ENCODE measurements at regions of chr15 and their contacts with region 1.

Region 1: DNA sequence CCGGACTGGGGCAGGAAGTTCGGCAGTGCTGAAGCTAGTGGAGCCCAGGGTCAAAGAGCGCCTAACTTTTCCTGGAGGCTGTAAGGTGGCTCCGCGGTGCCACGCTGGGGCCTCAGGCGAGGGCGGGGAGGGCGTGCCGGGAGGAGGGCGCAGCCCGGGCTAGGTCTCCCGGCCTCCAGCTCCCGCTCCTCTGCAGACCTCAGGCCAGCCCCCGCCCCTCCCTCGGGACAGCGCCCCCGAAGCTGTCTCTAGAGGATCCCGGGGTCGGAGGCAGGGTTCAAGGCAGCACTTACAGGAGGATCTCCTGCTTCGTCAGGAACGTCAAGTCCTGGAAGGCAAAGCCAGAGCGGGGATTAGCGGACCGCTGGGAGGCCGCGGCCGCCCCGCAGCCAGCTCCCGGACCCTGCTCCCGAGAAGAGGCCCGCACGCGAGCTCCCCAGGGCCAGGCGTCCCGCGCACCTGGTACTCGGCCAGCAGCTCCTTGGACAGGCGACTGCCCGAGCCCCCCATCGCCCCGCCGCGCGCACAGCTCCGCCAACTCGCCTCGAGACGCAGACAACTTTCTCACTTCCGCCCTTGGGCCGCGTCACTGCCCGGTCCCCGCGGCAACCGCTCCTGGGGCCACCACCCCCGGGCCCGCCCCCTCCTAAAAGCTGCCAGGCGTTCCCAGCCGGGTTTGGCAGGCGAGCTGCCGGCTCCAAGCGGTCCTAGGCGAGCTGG is at the start of gene CIB1:
- DNase-seq: peak; percentile 99
- H3K4me3 ChIP-seq: peak within 1 kb of the TSS; percentile 71 to 91 (median 83)
- H3K27ac ChIP-seq: peak within 1 kb of the TSS; percentile 87 to 96 (median 92)
- H3K4me1 ChIP-seq: peaks cover 0 to 59% (median 49%) of the 10 kb centered on the region in 4 donors
- H3K27me3 ChIP-seq: no peaks in the 10 kb centered on the region
- CTCF ChIP-seq: peak in 2 of 4 experiments; percentile 49 to 50
- EP300 ChIP-seq: peak in 1 of 4 donors; percentile 60
- POLR2A ChIP-seq: peak; percentile 49 to 66
- total RNA-seq, gene CIB1: 18.6 to 35.7 (median 35.5) TPM

Region 2: GRCh38 chr15:89893696-89894455 is 339.7 kb before region 1 on chr15 and contains the start of gene AP3S2:
- intact Hi-C with region 1: loop called (anchors 10 kb)
- DNase-seq: peak; percentile 96
- H3K4me3 ChIP-seq: peak within 1 kb of the TSS; percentile 79 to 91 (median 80)
- H3K27ac ChIP-seq: peak within 1 kb of the TSS; percentile 86 to 93 (median 90)
- H3K4me1 ChIP-seq: peaks cover 0 to 20% (median 15%) of the 10 kb centered on the region in 4 donors
- H3K27me3 ChIP-seq: no peaks in the 10 kb centered on the region
- CTCF ChIP-seq: no peak
- EP300 ChIP-seq: no peak
- POLR2A ChIP-seq: peak; percentile 22
- total RNA-seq, gene AP3S2: 24.1 to 37.8 (median 26.6) TPM

Region 3: DNA sequence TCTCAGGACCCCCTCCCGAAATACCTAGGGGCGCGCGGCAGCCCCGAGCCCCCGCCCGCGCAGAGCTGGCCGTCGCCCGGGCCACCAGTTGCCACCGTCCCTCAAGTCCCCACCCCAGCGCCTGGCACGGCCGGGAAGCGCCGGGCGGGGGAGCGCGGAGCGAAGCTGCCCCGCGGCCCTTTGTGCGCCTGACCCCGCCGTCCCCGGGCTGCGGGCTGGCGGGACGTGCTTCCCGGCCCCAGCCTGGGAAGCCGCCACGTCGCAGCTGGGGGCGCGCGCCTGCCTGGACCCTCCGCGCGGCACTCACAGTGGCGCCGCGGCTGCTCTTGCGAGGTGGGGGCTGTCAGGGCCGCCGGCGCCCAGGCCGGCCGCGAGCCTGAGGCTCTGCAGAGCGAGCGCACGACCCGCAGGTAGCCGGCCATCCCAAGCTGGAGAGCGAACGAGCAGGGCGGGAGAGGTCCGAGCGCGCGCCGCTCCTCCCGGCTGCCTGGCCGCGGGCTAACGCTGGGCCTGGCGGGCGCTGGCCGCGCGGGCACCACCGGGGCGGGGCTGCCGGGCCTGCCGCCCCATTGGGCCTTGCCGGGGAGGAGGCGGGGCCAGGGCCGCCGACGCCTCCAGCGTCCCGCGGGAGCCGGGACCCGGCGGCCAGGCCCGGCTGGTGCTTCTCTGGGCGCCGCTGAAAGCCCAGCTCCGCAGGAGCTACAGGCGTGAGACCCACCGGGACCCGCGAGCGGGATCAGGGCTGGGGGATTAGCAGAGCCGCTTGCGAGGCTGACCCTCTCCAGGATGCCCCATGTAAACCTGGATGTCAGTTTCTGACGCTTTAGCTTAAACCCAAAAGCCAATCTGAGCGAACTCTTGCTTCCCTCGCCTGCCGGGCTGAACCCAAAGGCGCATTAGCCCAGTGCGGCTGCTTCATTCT is 131.3 kb before region 1 on chr15 and contains the start of gene IDH2:
- intact Hi-C with region 1: loop called (anchors 5 kb)
- DNase-seq: peak; percentile 89
- H3K4me3 ChIP-seq: peak within 1 kb of the TSS; percentile 67 to 95 (median 78)
- H3K27ac ChIP-seq: peak within 1 kb of the TSS; percentile 94 to 100 (median 98)
- H3K4me1 ChIP-seq: peaks cover 0 to 83% (median 79%) of the 10 kb centered on the region in 4 donors
- H3K27me3 ChIP-seq: no peaks in the 10 kb centered on the region
- CTCF ChIP-seq: no peak
- EP300 ChIP-seq: no peak
- POLR2A ChIP-seq: peak; percentile 76 to 82
- total RNA-seq, gene IDH2: 77.2 to 164 (median 116) TPM

Region 4: GRCh38 chr15:90265271-90266060 is 31.9 kb after region 1 on chr15 and contains the start of gene NGRN:
- intact Hi-C with region 1: loop called (anchors 1 kb)
- DNase-seq: peak; percentile 96
- H3K4me3 ChIP-seq: peak within 1 kb of the TSS; percentile 64 to 85 (median 77)
- H3K27ac ChIP-seq: peak within 1 kb of the TSS; percentile 93 to 99 (median 96)
- H3K4me1 ChIP-seq: peaks cover 0 to 49% (median 43%) of the 10 kb centered on the region in 4 donors
- H3K27me3 ChIP-seq: no peaks in the 10 kb centered on the region
- CTCF ChIP-seq: no peak
- EP300 ChIP-seq: no peak
- POLR2A ChIP-seq: peak; percentile 66 to 93
- total RNA-seq, gene NGRN: 81.2 to 139 (median 111) TPM

Region 5: GRCh38 chr15:90300988-90301706 is 67.6 kb after region 1 on chr15:
- intact Hi-C with region 1: no loop called
- DNase-seq: peak; percentile 76
- H3K4me3 ChIP-seq: no peak overlapping the region
- H3K27ac ChIP-seq: no peak overlapping the region
- H3K4me1 ChIP-seq: peaks cover 0 to 9% (median 4%) of the 10 kb centered on the region in 4 donors
- H3K27me3 ChIP-seq: no peaks in the 10 kb centered on the region
- CTCF ChIP-seq: peak; percentile 31 to 73 (median 60)
- EP300 ChIP-seq: no peak
- POLR2A ChIP-seq: no peak

Region 6: DNA sequence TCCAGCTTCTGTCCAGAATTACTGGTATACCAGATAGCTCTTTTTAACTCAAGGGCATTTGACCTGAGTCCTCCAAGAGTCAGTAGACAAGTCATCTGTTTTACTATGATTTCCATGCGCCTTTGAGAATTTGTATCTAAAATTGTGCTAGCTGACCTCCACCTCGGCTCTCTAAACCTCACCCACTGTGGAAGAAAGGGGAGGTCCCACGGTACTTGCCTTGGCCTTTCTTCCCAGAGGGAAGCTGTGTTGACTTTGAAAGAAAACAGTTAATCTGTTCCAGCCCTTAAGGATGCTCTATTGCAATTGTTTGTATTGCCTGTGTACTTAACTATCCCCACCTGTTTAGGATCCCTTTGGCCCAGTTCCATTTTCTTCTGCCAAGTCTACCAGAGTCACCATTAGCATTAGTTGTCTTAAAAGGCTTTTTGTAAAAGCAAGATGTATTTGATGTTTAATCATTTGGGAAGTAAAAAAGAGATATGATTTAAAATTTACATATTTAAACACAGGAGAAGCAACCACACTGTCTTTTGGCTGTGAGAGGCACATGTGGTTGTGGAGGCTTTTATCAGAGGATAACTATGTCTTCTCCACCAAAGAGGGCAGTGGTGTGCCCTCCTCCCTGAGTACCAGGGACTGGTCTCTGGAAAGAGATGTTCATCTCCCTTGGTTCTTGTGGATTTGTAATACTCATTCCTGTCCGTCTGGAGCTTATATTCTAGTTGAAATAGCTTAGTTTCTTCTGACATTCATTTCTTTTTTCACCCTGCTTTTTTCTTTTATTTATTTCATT is 385.0 kb after region 1 on chr15:
- intact Hi-C with region 1: no loop called
- DNase-seq: no peak
- H3K4me3 ChIP-seq: no peak overlapping the region
- H3K27ac ChIP-seq: peak overlapping the region in 3 of 4 donors; percentile 5 to 73 (median 53)
- H3K4me1 ChIP-seq: peaks cover 0 to 21% (median 17%) of the 10 kb centered on the region in 4 donors
- H3K27me3 ChIP-seq: no peaks in the 10 kb centered on the region
- CTCF ChIP-seq: no peak
- EP300 ChIP-seq: no peak
- POLR2A ChIP-seq: no peak

Measured in sigmoid colon (tissue), 7 donors.